Activated CD8-positive, alpha-beta T cell treated with anti-CD3 and anti-CD28 coated beads for 36 hours (primary cell): ENCODE measurements at regions of chr4 and their contacts with region 1.

Region 1: DNA sequence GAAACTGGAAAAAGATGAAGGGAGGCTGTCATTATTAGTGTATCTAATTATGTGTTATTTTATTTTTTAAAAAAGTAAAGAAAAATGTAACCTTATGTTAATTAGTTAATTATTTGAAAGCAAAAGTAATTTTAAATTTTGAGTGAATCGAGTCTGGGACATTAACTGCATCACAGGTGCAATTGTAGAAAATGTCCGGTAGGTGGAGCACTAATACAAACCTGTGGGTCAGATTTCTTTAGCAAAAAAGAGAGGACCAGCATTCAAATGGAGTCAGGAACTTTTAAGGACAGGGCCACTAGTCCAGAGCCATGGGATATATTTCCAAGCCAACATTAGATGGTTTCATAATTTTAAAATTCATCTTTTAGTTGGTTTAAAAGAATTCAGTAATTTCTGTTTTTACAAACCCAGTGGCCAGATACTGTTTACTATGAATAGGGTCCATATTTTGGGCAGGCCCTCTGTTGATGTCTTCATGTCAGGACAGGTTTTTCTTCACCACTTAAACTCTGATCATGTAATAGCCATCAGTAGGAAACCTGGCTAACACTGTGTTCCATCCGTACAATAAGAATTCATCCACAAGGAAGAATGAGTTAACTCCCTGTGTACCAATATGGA is 27.2 kb downstream of the BST1 start:
- DNase-seq: peak; percentile 43
- ATAC-seq: peak; percentile 76
- H3K4me3 Mint-ChIP-seq: no peak overlapping the region
- H3K27ac Mint-ChIP-seq: no peak overlapping the region
- H3K4me1 Mint-ChIP-seq: peaks cover 18% of the 10 kb centered on the region
- H3K27me3 Mint-ChIP-seq: no peaks in the 10 kb centered on the region
- CTCF ChIP-seq: peak; percentile 94

Region 2: GRCh38 chr4:15756361-15756861 is 26.4 kb after region 1 on chr4:
- CTCF ChIA-PET with region 1: interaction called, 18 read pairs
- POLR2A ChIA-PET with region 1: interaction called, 5 read pairs
- intact Hi-C with region 1: no loop called
- DNase-seq: peak; percentile 90
- ATAC-seq: peak; percentile 84
- H3K4me3 Mint-ChIP-seq: peak overlapping the region; percentile 66
- H3K27ac Mint-ChIP-seq: peak overlapping the region; percentile 92
- H3K4me1 Mint-ChIP-seq: peaks cover 47% of the 10 kb centered on the region
- H3K27me3 Mint-ChIP-seq: no peaks in the 10 kb centered on the region
- CTCF ChIP-seq: peak; percentile 73

Region 3: GRCh38 chr4:15873117-15873516 is 143.1 kb after region 1 on chr4:
- CTCF ChIA-PET with region 1: no interaction called
- POLR2A ChIA-PET with region 1: no interaction called
- intact Hi-C with region 1: loop called (anchors 10 kb)
- DNase-seq: no peak
- ATAC-seq: no peak
- H3K4me3 Mint-ChIP-seq: no peak overlapping the region
- H3K27ac Mint-ChIP-seq: no peak overlapping the region
- H3K4me1 Mint-ChIP-seq: no peaks in the 10 kb centered on the region
- H3K27me3 Mint-ChIP-seq: peaks cover 5% of the 10 kb centered on the region
- CTCF ChIP-seq: no peak

Region 4: DNA sequence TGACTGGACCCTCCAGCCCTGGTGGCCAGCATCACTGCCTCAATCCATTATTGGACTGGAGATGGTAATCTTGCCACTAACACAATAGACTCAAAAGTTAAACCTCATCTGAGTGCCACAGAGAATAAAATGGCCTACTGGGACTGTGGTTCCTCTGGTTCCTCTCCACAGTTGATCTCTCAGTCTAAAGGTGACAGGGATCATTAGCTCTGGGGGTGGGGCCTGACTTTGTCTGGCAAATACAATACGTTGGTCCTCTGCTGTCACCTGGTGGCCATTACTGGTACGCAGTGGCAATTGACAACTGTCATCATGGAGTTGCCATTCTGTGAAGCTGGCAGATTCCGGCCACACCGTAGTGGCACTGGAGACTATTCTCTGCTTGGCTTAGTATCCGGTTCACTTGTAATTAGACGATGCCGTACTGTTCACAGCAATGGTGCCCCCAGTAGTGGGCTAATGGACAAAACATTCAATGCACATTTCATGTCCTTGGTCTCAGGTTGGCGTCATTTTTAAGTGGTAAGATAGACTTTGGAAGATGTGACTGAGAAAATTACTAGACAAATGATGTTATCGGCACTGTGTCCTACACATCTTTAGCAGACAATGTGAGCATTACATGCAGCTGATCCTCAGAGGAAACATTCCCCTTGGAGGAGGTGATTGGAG is 226.3 kb after region 1 on chr4:
- CTCF ChIA-PET with region 1: interaction called, 21 read pairs
- POLR2A ChIA-PET with region 1: no interaction called
- intact Hi-C with region 1: loop called (anchors 2 kb)
- DNase-seq: peak; percentile 96
- ATAC-seq: peak; percentile 90
- H3K4me3 Mint-ChIP-seq: no peak overlapping the region
- H3K27ac Mint-ChIP-seq: no peak overlapping the region
- H3K4me1 Mint-ChIP-seq: peaks cover 19% of the 10 kb centered on the region
- H3K27me3 Mint-ChIP-seq: peaks cover 2% of the 10 kb centered on the region
- CTCF ChIP-seq: peak; percentile 87